CD14-positive monocyte (primary cell): ENCODE measurements at regions of chr5 and their contacts with region 1.

Region 1: GRCh38 chr5:132272311-132273210 is 15.1 kb downstream of the PDLIM4 start:
- DNase-seq: peak; percentile 42 to 56 (median 47)
- H3K4me3 ChIP-seq: peak overlapping the region in 1 of 3 experiments; percentile 29
- H3K4me3 Mint-ChIP-seq: peak overlapping the region; percentile 74 to 86
- H3K27ac ChIP-seq: no peak overlapping the region
- H3K27ac Mint-ChIP-seq: peak overlapping the region in 2 of 7 donors; percentile 70 to 78
- H3K4me1 ChIP-seq: peaks cover 3 to 17% of the 10 kb centered on the region in 2 donors
- H3K4me1 Mint-ChIP-seq: peaks cover 21% of the 10 kb centered on the region
- H3K27me3 ChIP-seq: no peaks in the 10 kb centered on the region
- H3K27me3 Mint-ChIP-seq: peaks cover 8 to 18% (median 15%) of the 10 kb centered on the region in 3 donors
- CTCF ChIP-seq: peak; percentile 93

Region 2: GRCh38 chr5:132321109-132321721 is 48.7 kb after region 1 on chr5:
- intact Hi-C with region 1: loop called (anchors 5 to 10 kb)
- DNase-seq: no peak
- H3K4me3 ChIP-seq: no peak overlapping the region
- H3K4me3 Mint-ChIP-seq: no peak overlapping the region
- H3K27ac ChIP-seq: peak overlapping the region in 1 of 2 donors; percentile 7
- H3K27ac Mint-ChIP-seq: peak overlapping the region in 2 of 7 donors; percentile 11 to 40
- H3K4me1 ChIP-seq: no peaks in the 10 kb centered on the region
- H3K4me1 Mint-ChIP-seq: no peaks in the 10 kb centered on the region
- H3K27me3 ChIP-seq: no peaks in the 10 kb centered on the region
- H3K27me3 Mint-ChIP-seq: no peaks in the 10 kb centered on the region
- CTCF ChIP-seq: no peak

Region 3: DNA sequence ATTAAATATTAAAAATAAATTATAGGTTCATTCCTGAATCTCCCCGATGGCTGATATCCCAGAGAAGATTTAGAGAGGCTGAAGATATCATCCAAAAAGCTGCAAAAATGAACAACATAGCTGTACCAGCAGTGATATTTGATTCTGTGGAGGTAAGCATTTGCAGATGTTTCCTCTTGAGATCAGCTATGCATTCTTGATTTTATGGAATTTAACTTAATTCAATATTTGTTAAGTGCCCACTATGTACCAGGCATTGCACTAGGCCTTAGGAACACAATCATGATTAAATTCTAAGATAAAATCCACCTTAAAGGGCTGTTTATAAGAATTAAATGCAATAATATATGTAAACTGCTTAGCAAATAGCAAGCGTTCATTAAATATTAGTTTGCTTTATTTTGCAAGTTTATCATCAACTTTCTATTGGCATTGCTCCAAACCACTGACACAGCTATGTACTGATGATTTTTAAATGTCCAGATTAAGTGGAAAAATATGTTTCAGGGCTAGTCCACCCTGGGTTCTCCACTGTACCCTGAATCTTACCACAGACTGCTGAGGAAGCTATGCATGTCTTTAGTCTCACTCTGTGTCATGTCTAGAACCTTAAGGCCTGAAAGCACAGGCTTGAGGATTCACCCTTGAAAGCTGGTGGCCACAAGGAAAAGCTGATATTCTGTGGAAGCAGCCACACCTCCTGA is 54.8 kb after region 1 on chr5:
- intact Hi-C with region 1: loop called (anchors 5 to 10 kb)
- DNase-seq: no peak
- H3K4me3 ChIP-seq: no peak overlapping the region
- H3K4me3 Mint-ChIP-seq: no peak overlapping the region
- H3K27ac ChIP-seq: no peak overlapping the region
- H3K27ac Mint-ChIP-seq: peak overlapping the region in 1 of 7 donors; percentile 37
- H3K4me1 ChIP-seq: no peaks in the 10 kb centered on the region
- H3K4me1 Mint-ChIP-seq: no peaks in the 10 kb centered on the region
- H3K27me3 ChIP-seq: no peaks in the 10 kb centered on the region
- H3K27me3 Mint-ChIP-seq: peaks cover 0 to 2% (median 0%) of the 10 kb centered on the region in 3 donors
- CTCF ChIP-seq: no peak